Mucosa of descending colon (tissue), 3 donors: ENCODE measurements at regions of chr17 and their contacts with region 1.

Region 1: GRCh38 chr17:48871551-48872351 is 20.8 kb upstream of the ATP5MC1 start:
- DNase-seq: peak; percentile 76 to 87 (median 84)
- ATAC-seq: peak; percentile 87
- H3K4me3 ChIP-seq: no peak overlapping the region
- H3K4me1 ChIP-seq: peaks cover 52% of the 10 kb centered on the region
- CTCF ChIP-seq: no peak

Region 2: DNA sequence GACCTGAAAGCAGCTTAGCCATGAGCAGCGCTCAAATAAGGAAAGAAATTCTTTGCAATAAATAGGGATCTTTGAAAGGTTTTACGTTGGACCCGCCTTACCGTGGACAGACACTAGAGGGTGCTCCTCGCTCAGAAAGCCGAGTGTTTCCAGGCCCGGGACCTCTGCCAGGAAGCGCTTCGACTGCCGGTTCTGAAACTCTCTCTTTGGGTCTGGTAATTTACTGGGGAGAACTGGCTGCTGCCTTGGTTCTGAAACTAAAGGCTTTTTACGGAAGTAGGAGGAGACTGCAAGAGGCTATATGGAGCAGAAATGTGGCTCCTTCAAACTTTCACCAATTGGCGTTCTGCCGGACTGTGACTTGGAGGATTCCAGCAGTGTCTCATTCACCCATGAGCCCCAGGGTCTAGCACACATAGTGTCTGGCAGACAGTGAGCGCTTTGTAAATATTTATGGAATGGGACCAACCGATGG is 200.0 kb before region 1 on chr17:
- intact Hi-C with region 1: loop called (anchors 5 to 10 kb)
- DNase-seq: peak; percentile 70 to 96 (median 88)
- ATAC-seq: peak; percentile 93
- H3K4me3 ChIP-seq: no peak overlapping the region
- H3K4me1 ChIP-seq: peaks cover 18% of the 10 kb centered on the region
- CTCF ChIP-seq: peak; percentile 75

Region 3: DNA sequence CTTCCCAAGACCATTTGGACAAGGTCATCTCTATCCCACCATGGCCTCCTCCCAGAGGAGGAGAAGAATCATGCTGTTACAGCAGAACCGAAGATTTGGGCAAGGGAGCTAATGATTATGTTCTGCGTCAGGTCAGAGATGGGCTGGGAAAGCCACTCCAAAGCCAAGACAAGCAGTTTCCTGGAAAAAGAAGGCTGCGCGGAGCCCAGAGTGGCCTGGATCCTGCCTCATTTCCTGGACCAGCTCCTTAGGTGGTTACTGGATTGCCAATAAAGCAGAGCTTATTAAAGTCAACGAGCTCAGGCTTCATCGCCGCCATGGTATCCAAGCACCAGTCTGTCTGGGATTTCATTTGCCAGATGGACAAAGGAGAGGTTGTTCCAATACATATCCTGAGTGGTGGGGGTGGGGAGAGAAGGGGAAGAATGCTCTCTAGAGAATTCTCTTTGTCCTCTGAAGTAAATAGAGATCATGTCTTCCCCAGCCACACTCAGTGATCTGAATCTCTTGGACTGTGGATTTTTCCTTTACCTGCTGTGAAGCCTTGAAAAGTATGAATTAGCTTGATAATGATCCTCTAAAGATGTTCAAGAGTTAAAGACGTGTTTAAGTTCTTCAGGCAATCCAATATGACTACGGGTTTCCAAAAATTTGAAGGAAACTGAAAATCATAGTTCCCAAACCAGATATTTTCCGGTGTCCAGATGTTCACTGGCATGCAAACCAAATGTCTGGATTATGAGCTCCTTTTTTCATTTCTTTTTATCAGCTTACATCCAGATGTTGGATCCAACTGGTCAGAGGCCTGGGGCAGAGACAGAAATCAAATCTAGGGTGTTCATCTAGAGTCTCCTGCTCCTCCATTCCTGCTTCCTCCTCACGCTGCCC is 167.1 kb before region 1 on chr17:
- intact Hi-C with region 1: no loop called
- DNase-seq: no peak
- ATAC-seq: no peak
- H3K4me3 ChIP-seq: no peak overlapping the region
- H3K4me1 ChIP-seq: no peaks in the 10 kb centered on the region
- CTCF ChIP-seq: no peak